Left colon (tissue), 2 donors: ENCODE measurements at regions of chr11 and their contacts with region 1.

Region 1: GRCh38 chr11:35629914-35630313 is 11.7 kb downstream of the FJX1 start:
- DNase-seq: no peak
- ATAC-seq: no peak

Region 2: DNA sequence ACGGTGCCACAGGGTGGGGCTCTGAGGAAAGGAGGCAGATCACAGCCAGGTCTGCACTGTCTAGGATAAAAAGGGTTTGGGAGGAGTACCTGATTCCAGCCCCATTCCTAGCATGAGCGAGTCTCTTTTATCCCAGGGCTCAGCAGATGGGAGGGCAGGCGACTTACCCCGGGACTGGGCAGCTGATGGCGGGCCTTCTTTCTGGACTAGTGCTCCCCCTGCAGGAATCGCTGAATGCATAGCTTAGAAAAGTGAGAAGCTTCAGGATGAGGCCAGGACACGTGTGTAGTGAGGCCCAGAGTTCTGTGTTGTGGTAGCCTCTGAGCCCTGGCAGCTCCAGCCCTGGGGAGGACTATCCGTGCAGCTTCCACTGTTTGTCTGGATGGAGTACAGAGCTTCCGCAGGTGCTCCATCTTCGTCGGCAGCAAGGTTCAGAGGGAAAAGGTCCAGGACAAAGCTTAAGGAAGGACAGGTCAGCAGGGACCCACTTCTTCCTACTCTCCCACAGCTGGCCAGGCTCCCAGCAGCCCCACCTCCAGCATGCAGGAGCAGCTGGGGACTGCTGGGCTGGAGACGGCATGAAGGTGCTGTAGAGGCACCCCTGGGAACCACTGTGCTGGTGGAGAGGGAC is 628.9 kb after region 1 on chr11:
- intact Hi-C with region 1: loop called in 1 of 2 experiments (anchors 5 kb)
- DNase-seq: peak; percentile 34 to 35
- ATAC-seq: peak; percentile 80